HepG2 (cell line): ENCODE measurements at regions of chr3 and their contacts with region 1.

Region 1: DNA sequence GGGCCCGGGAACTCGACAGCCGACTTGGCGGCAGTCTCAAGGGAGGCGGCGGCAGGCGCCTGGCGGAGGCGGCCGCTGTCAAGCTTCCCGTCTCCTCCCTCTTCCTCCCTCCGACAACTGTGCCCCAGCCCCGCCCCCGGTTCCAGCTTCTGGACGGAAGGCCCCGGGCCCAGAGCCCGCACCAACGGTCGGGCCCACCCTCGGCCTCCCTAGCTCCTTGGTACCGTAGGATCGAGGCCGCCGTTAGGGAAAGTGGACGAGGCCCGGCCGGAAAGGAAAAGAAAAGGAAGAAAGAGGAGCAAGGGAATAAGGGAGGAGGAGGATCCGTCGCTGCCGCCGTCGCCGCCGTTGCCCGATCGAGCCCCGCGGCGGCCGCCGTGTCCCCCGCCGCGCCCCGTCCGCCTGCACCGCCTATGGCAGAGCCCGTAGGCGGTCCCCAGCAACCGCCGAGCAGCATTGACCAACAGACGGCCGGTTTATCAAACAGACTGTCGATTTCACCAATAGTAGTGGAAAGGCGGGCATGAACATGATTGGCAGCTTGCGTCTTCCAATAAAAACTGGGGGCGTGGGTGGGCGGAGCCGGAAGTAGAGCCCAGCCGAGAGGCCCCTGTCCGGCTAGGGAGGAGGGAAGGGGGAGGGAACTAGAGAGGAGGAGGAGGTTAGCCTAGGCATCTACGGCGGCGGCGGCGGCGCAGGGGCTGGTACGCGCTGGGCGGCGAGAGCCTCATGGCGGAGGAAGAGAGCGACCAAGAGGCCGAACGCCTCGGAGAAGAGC is at the starts of genes CGGBP1 and ZNF654:
- DNase-seq: peak; percentile 97
- ATAC-seq: peak; percentile 96
- H3K4me3 ChIP-seq: peak within 1 kb of the TSS; percentile 80 to 95 (median 91)
- H3K27ac ChIP-seq: peak within 1 kb of the TSS; percentile 88
- H3K4me1 ChIP-seq: peaks cover 30% of the 10 kb centered on the region
- H3K27me3 ChIP-seq: no peaks in the 10 kb centered on the region; a peak in 1 of 5 replicates
- CTCF ChIP-seq: no peak
- EP300 ChIP-seq: no peak; a peak in 1 of 4 replicates
- POLR2A ChIP-seq: peak; percentile 67 to 93
- RAD21 ChIP-seq: no peak
- total RNA-seq, gene CGGBP1: 38.9 and 45.7 TPM in 2 replicates
- total RNA-seq, gene ZNF654: 4.1 and 5.3 TPM in 2 replicates

Region 2: DNA sequence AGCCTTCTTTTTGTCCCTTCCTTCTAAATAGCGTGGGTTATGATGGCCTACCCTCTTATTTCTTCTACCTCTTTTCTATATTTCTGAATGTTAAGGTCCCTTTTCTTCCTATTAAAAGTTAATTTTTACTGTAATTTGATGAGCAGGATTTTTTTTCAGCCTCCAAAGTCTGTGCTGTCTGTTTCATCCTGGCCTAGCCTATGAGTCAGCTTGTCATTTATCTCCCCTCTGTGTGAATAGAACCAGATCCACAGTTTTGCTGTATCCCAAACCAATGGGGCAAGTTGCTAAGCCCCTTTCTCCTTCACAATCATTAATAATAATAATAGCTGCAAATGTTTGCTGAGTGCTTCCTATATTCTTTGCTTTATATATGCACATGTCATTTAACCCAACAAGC is 72.9 kb after region 1 on chr3:
- CTCF ChIA-PET with region 1: no interaction called
- POLR2A ChIA-PET with region 1: no interaction called
- in situ Hi-C with region 1: no loop called
- intact Hi-C with region 1: loop called (anchors 5 kb)
- DNase-seq: no peak
- ATAC-seq: no peak
- H3K4me3 ChIP-seq: no peak overlapping the region
- H3K27ac ChIP-seq: no peak overlapping the region
- H3K4me1 ChIP-seq: no peaks in the 10 kb centered on the region
- H3K27me3 ChIP-seq: no peaks in the 10 kb centered on the region
- CTCF ChIP-seq: no peak
- EP300 ChIP-seq: no peak
- POLR2A ChIP-seq: no peak
- RAD21 ChIP-seq: no peak